ENCODE measurements at regions of chr14 and their contacts with region 1.

Region 1: GRCh38 chr14:58501214-58501816 is 73.8 kb downstream of the KIAA0586 start:
- DNase-seq: no peak
- H3K4me3 ChIP-seq: no peak overlapping the region
- H3K27ac ChIP-seq: no peak overlapping the region
- H3K4me1 ChIP-seq: no peaks in the 10 kb centered on the region
- H3K27me3 ChIP-seq: no peaks in the 10 kb centered on the region
- CTCF ChIP-seq: peak; percentile 88

Region 2: GRCh38 chr14:58607946-58608306 is 106.6 kb after region 1 on chr14:
- intact Hi-C with region 1: no loop called
- DNase-seq: no peak
- H3K4me3 ChIP-seq: no peak overlapping the region
- H3K27ac ChIP-seq: no peak overlapping the region
- H3K4me1 ChIP-seq: no peaks in the 10 kb centered on the region
- H3K27me3 ChIP-seq: no peaks in the 10 kb centered on the region
- CTCF ChIP-seq: no peak

Region 3: DNA sequence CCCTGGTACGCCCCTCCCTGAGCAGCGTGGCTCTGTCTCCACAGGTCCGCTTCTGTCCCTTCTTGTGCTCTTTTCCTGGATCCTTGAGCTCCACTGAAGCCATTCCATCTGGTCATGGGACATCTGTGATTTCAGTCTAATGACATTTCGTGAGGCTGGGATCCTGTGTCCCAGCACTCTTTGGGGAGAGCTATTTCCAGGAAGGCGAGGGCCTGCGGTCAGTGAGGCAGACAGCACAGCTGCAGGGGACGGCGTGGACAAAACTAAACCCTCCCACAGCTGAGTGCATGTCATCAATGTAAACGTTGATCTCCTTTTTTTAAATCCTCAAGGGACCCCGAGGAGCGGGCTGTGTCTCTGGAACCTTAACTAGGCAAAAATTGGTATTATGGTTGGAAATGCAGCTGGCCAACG is 264.1 kb after region 1 on chr14:
- intact Hi-C with region 1: no loop called
- DNase-seq: peak; percentile 38
- H3K4me3 ChIP-seq: no peak overlapping the region
- H3K27ac ChIP-seq: peak overlapping the region; percentile 60
- H3K4me1 ChIP-seq: peaks cover 5% of the 10 kb centered on the region
- H3K27me3 ChIP-seq: no peaks in the 10 kb centered on the region
- CTCF ChIP-seq: no peak

Region 4: DNA sequence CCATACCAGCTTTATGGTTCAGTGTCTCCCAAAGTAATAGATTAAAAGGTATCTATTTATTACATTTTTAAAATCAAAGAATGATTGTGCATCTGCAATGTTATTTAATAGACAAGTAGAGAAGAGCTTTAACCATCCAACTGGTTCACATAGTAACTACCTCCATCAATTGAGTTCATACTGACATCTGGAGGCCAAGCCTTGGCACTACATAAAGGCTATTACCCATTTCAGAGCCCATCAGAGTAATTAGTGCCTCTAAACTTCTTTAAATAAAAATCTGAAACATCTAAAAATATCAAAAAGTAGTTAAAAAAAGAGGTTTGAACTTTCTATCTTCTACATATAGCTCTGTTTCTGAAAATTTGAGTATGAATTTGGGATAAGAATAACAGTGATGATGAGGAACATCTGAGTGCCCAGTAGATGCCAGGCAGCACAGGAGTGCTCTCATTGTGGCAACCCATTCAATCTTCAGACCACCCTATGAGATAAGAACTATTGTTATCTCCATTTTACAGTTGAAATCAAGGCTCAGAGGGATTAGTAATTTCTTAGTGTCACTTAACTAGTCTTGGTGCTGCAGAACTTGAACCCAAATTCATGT is 554.2 kb after region 1 on chr14:
- intact Hi-C with region 1: loop called (anchors 2 kb)
- DNase-seq: no peak
- H3K4me3 ChIP-seq: no peak overlapping the region
- H3K27ac ChIP-seq: no peak overlapping the region
- H3K4me1 ChIP-seq: no peaks in the 10 kb centered on the region
- H3K27me3 ChIP-seq: peaks cover 3% of the 10 kb centered on the region
- CTCF ChIP-seq: peak; percentile 80

Measured in left ventricle myocardium inferior (tissue), 1 donor.